Left ventricle myocardium inferior (tissue), 1 donor: ENCODE measurements at regions of chr11 and their contacts with region 1.

Region 1: GRCh38 chr11:12893787-12894672 is 115.1 kb upstream of the RASSF10 start:
- DNase-seq: peak; percentile 54
- H3K4me3 ChIP-seq: no peak overlapping the region
- H3K27ac ChIP-seq: peak overlapping the region; percentile 61
- H3K4me1 ChIP-seq: peaks cover 74% of the 10 kb centered on the region
- H3K27me3 ChIP-seq: no peaks in the 10 kb centered on the region
- CTCF ChIP-seq: peak; percentile 92

Region 2: GRCh38 chr11:12411806-12412727 is 482.0 kb before region 1 on chr11:
- intact Hi-C with region 1: loop called (anchors 10 kb)
- DNase-seq: peak; percentile 63
- H3K4me3 ChIP-seq: no peak overlapping the region
- H3K27ac ChIP-seq: peak overlapping the region; percentile 61
- H3K4me1 ChIP-seq: peaks cover 81% of the 10 kb centered on the region
- H3K27me3 ChIP-seq: no peaks in the 10 kb centered on the region
- CTCF ChIP-seq: peak; percentile 82

Region 3: GRCh38 chr11:12526789-12527188 is 367.2 kb before region 1 on chr11:
- intact Hi-C with region 1: no loop called
- DNase-seq: no peak
- H3K4me3 ChIP-seq: no peak overlapping the region
- H3K27ac ChIP-seq: no peak overlapping the region
- H3K4me1 ChIP-seq: peaks cover 19% of the 10 kb centered on the region
- H3K27me3 ChIP-seq: no peaks in the 10 kb centered on the region
- CTCF ChIP-seq: no peak